Dorsolateral prefrontal cortex (tissue), 120 donors: ENCODE measurements at regions of chr1 and their contacts with region 1.

Region 1: DNA sequence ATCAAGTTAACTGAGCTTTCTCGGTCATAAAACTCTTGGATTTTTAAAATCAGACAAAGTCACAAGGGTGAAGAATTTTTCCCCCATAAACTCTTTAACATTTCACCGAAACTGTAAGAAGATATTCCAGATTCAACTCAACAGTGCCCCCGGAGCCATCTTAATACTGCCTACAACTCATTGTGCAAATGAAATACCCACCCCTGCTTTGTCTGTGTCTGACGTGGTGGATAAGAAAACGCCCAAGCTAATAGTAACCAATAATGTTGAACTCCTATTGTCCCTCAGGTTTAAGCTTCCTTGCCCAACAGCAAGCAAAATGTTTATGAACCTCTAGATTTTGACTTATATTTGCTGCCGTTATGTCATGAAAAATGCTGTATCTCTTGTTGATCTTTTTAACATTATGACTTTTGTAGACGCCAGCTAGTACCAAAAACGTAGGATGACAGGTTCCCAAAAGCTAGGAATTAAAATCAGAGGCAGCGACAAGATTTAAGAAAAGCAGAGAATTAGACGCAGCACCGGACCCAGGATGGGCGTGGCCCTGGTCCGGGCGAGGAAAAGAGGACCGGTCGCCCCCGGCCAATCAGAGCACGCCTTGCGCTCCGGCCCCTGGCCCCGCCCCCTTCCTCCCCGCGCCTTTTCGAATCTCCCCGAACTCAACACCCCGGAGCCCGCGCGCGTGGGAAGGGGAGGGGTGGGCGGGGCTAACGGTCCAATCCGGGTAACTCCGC is 1.1 kb downstream of the STMN1 start:
- DNase-seq: peak; percentile 94 to 99 (median 97)
- H3K4me3 ChIP-seq: peak overlapping the region; percentile 62 to 99 (median 93)
- H3K27ac ChIP-seq: peak overlapping the region in 58 of 59 donors; percentile 17 to 99 (median 95)
- H3K27me3 ChIP-seq: no peaks in the 10 kb centered on the region
- CTCF ChIP-seq: peak in 14 of 56 donors; percentile 3 to 23 (median 16)

Region 2: DNA sequence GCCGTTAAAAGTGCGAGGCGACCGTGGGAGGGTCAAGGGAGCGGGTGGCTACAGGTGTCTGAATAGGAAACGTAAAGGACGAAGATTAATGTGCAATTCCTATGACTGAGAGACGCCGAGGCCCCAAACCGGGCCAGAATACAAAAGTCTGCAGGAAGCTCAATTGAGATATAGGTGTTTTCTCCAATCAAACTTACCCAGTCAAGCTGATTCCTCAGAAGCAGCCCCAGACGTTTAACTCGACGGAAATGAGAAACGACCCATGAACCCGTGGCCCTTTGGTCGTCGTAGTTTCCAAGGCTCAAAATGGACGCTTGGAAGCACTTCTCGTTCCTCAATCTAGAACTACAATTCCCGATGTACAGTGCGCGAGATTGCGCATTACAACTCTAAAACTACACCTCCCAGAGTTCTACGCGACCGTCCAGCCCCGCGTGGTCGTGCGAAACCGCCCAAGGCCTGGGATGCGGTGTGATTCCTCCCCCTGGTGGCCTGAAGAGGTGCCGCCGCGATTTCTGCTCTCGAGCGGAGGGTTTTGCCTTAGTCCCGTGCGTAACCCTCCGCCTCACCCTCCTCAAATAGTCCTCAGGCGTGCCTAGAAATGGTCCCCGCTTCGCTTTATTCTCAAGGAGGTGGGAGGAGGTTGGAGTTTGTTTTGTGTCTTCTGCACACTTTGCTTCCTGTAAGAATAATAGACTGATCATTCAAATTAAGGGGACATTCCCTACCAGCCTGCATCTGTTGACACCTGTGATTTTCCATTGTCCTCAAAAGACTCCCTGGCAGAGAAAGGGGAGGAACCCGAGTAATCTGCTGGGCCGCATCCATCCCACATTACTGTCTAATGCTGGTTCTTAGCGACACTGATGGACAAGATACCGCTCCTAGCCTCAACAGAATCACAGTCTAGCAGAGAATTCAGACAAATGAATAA is 93.0 kb after region 1 on chr1 and contains the start of gene PAFAH2:
- intact Hi-C with region 1: loop called in 1 of 2 experiments (anchors 2 kb)
- DNase-seq: peak; percentile 92 to 98 (median 96)
- H3K4me3 ChIP-seq: peak within 1 kb of the TSS; percentile 39 to 93 (median 77)
- H3K27ac ChIP-seq: peak within 1 kb of the TSS; percentile 47 to 95 (median 89)
- H3K27me3 ChIP-seq: no peaks in the 10 kb centered on the region
- CTCF ChIP-seq: peak; percentile 98 to 100 (median 99)
- total RNA-seq, gene PAFAH2: 3.7 to 19.3 (median 8.5) TPM